OCI-LY7 (cell line): ENCODE measurements at regions of chr13 and their contacts with region 1.

Region 1: GRCh38 chr13:44906713-44907112 is 82.6 kb downstream of the NUFIP1 start:
- DNase-seq: no peak
- H3K4me3 ChIP-seq: no peak overlapping the region
- H3K27ac ChIP-seq: no peak overlapping the region
- H3K4me1 ChIP-seq: peaks cover 4% of the 10 kb centered on the region
- CTCF ChIP-seq: no peak

Region 2: GRCh38 chr13:44894001-44894780 is 12.5 kb before region 1 on chr13:
- CTCF ChIA-PET with region 1: interaction called, 14 read pairs
- POLR2A ChIA-PET with region 1: no interaction called
- intact Hi-C with region 1: no loop called
- DNase-seq: no peak
- H3K4me3 ChIP-seq: no peak overlapping the region
- H3K27ac ChIP-seq: no peak overlapping the region
- H3K4me1 ChIP-seq: no peaks in the 10 kb centered on the region
- CTCF ChIP-seq: no peak

Region 3: GRCh38 chr13:45269204-45269603 is 362.5 kb after region 1 on chr13:
- CTCF ChIA-PET with region 1: no interaction called
- POLR2A ChIA-PET with region 1: no interaction called
- intact Hi-C with region 1: no loop called
- DNase-seq: no peak
- H3K4me3 ChIP-seq: no peak overlapping the region
- H3K27ac ChIP-seq: no peak overlapping the region
- H3K4me1 ChIP-seq: no peaks in the 10 kb centered on the region
- CTCF ChIP-seq: no peak